Activated naive CD4-positive, alpha-beta T cell treated with anti-CD3 and anti-CD28 coated beads, Interleukin-2, amount 10 ng/mL, durations not matched to agents 7 days and 5 days (primary cell): ENCODE measurements at regions of chr20 and their contacts with region 1.

Region 1: GRCh38 chr20:5056801-5057599 is 55.7 kb upstream of the SLC23A2 start:
- DNase-seq: peak; percentile 84
- H3K4me3 Mint-ChIP-seq: no peak overlapping the region
- H3K27ac Mint-ChIP-seq: peak overlapping the region; percentile 88
- H3K4me1 Mint-ChIP-seq: peaks cover 36% of the 10 kb centered on the region
- H3K27me3 Mint-ChIP-seq: peaks cover 4% of the 10 kb centered on the region

Region 2: GRCh38 chr20:5078399-5078958 is 21.5 kb after region 1 on chr20:
- CTCF ChIA-PET with region 1: interaction called, 10 read pairs
- DNase-seq: peak; percentile 91
- H3K4me3 Mint-ChIP-seq: peak overlapping the region; percentile 57
- H3K27ac Mint-ChIP-seq: peak overlapping the region; percentile 99
- H3K4me1 Mint-ChIP-seq: peaks cover 62% of the 10 kb centered on the region
- H3K27me3 Mint-ChIP-seq: no peaks in the 10 kb centered on the region

Region 3: DNA sequence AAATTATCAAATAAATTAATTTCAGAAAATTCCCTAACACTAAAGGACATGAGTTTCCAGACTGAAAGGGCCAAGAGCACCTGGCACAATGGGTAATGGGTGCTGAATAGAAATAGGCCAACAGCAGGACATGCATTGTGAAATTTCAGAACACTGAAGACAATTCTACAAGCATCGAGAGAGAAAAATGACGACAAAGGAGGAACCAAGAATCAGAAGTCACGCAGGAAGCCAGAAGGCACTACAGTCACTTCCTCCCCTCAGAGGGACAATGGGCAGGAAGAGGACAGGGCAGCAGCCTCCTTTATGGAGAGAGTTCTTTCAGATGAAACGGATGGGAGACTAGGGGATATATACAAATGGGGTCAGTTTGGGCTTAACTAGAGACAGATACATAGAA is 33.2 kb after region 1 on chr20:
- CTCF ChIA-PET with region 1: interaction called, 18 read pairs
- DNase-seq: peak; percentile 38
- H3K4me3 Mint-ChIP-seq: no peak overlapping the region
- H3K27ac Mint-ChIP-seq: peak overlapping the region; percentile 80
- H3K4me1 Mint-ChIP-seq: peaks cover 28% of the 10 kb centered on the region
- H3K27me3 Mint-ChIP-seq: no peaks in the 10 kb centered on the region

Region 4: GRCh38 chr20:5150226-5151076 is 93.5 kb after region 1 on chr20:
- CTCF ChIA-PET with region 1: no interaction called
- DNase-seq: no peak
- H3K4me3 Mint-ChIP-seq: no peak overlapping the region
- H3K27ac Mint-ChIP-seq: no peak overlapping the region
- H3K4me1 Mint-ChIP-seq: peaks cover 31% of the 10 kb centered on the region
- H3K27me3 Mint-ChIP-seq: no peaks in the 10 kb centered on the region

Region 5: GRCh38 chr20:6623989-6624388 is 1567.0 kb after region 1 on chr20:
- CTCF ChIA-PET with region 1: no interaction called
- DNase-seq: no peak
- H3K4me3 Mint-ChIP-seq: no peak overlapping the region
- H3K27ac Mint-ChIP-seq: no peak overlapping the region
- H3K4me1 Mint-ChIP-seq: no peaks in the 10 kb centered on the region
- H3K27me3 Mint-ChIP-seq: no peaks in the 10 kb centered on the region